ENCODE measurements at regions of chr5 and their contacts with region 1.

Region 1: DNA sequence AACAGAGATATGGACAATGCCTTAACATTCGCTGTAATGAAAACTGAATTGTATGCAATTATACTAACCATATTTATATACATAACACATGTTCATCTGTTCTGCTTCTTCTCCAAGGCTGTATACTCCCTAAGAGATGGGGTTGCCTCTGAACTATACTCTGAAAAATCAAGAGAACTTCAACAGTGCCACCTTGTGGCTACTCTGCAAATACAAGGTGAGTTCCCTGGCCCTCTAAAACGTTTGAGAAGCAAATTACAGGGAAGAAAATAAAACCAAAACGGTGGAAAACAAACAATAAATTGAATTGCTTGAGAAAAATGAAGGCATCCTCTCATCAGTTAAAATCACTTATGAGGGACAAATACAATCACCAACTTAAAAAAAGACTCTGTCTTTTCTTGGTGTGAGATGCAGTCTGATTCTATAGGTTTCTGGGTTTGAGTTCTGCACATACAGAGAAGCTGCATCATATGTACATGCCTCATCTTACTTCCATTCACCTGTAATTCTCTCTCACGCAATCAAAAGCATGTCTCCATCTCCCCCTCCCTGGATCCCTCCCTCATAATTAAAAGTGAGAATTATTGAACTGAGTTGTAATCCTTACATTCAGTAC is 98.6 kb downstream of the FBXW11 start:
- DNase-seq: peak; percentile 69
- ATAC-seq: peak; percentile 63
- H3K4me3 ChIP-seq: no peak overlapping the region
- H3K4me3 Mint-ChIP-seq: no peak overlapping the region
- H3K27ac ChIP-seq: no peak overlapping the region
- H3K27ac Mint-ChIP-seq: no peak overlapping the region
- H3K4me1 ChIP-seq: peaks cover 9 to 16% of the 10 kb centered on the region in 2 donors
- H3K4me1 Mint-ChIP-seq: peaks cover 50% of the 10 kb centered on the region
- H3K27me3 ChIP-seq: no peaks in the 10 kb centered on the region
- H3K27me3 Mint-ChIP-seq: no peaks in the 10 kb centered on the region
- CTCF ChIP-seq: peak; percentile 86

Region 2: GRCh38 chr5:171272996-171273970 is 634.6 kb before region 1 on chr5:
- CTCF ChIA-PET with region 1: no interaction called
- POLR2A ChIA-PET with region 1: no interaction called
- intact Hi-C with region 1: loop called (anchors 5 kb)
- DNase-seq: peak; percentile 2
- ATAC-seq: no peak
- H3K4me3 ChIP-seq: no peak overlapping the region
- H3K4me3 Mint-ChIP-seq: no peak overlapping the region
- H3K27ac ChIP-seq: no peak overlapping the region
- H3K27ac Mint-ChIP-seq: no peak overlapping the region
- H3K4me1 ChIP-seq: no peaks in the 10 kb centered on the region
- H3K4me1 Mint-ChIP-seq: no peaks in the 10 kb centered on the region
- H3K27me3 ChIP-seq: no peaks in the 10 kb centered on the region
- H3K27me3 Mint-ChIP-seq: peaks cover 21% of the 10 kb centered on the region
- CTCF ChIP-seq: no peak

Region 3: DNA sequence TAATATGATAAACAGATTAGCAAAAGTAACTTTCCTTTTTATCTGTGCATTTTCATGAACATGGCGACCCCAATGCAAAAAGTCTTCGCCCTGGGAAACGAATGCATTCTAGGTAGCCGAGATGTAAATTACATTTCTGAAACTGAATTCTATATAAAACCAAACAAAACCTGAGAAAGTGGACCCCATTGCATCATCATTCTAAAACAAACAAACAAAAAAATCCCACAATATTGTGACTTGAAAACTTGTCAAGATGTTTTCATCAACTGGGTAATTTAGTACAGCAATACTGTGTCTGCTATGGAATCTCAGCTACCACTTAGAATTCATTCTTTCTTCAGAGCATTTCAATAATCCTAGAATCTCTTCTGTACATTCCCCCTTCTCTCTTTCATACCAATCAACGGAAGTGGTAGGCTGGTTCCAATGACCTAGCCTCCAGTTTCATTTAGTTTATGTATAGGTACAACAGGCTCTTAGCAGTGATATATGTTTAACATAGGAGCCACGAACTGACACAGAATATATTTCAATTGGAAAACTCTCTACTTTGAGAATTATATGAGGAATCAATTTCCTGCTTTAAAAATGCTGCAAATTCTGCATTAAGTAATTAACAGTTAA is 13.0 kb after region 1 on chr5:
- CTCF ChIA-PET with region 1: interaction called, 27 read pairs
- POLR2A ChIA-PET with region 1: no interaction called
- intact Hi-C with region 1: no loop called
- DNase-seq: no peak
- ATAC-seq: no peak
- H3K4me3 ChIP-seq: no peak overlapping the region
- H3K4me3 Mint-ChIP-seq: no peak overlapping the region
- H3K27ac ChIP-seq: peak overlapping the region in 1 of 2 donors; percentile 49
- H3K27ac Mint-ChIP-seq: no peak overlapping the region
- H3K4me1 ChIP-seq: peaks cover 21 to 27% of the 10 kb centered on the region in 2 donors
- H3K4me1 Mint-ChIP-seq: peaks cover 67% of the 10 kb centered on the region
- H3K27me3 ChIP-seq: no peaks in the 10 kb centered on the region
- H3K27me3 Mint-ChIP-seq: no peaks in the 10 kb centered on the region
- CTCF ChIP-seq: no peak

Region 4: GRCh38 chr5:172035039-172035438 is 127.2 kb after region 1 on chr5:
- CTCF ChIA-PET with region 1: interaction called, 227 read pairs
- POLR2A ChIA-PET with region 1: interaction called, 3 read pairs
- intact Hi-C with region 1: loop called (anchors 1 kb)
- DNase-seq: peak; percentile 45
- ATAC-seq: peak; percentile 63
- H3K4me3 ChIP-seq: peak overlapping the region in 1 of 5 experiments; percentile 26
- H3K4me3 Mint-ChIP-seq: peak overlapping the region; percentile 15
- H3K27ac ChIP-seq: peak overlapping the region in 1 of 2 donors; percentile 61
- H3K27ac Mint-ChIP-seq: peak overlapping the region; percentile 50
- H3K4me1 ChIP-seq: peaks cover 12 to 15% of the 10 kb centered on the region in 2 donors
- H3K4me1 Mint-ChIP-seq: peaks cover 15% of the 10 kb centered on the region
- H3K27me3 ChIP-seq: no peaks in the 10 kb centered on the region
- H3K27me3 Mint-ChIP-seq: no peaks in the 10 kb centered on the region
- CTCF ChIP-seq: no peak

Region 5: GRCh38 chr5:172059661-172060100 is 151.8 kb after region 1 on chr5:
- CTCF ChIA-PET with region 1: interaction called, 72 read pairs
- POLR2A ChIA-PET with region 1: interaction called, 3 read pairs
- intact Hi-C with region 1: loop called (anchors 1 kb)
- DNase-seq: peak; percentile 46
- ATAC-seq: no peak
- H3K4me3 ChIP-seq: no peak overlapping the region
- H3K4me3 Mint-ChIP-seq: no peak overlapping the region
- H3K27ac ChIP-seq: no peak overlapping the region
- H3K27ac Mint-ChIP-seq: no peak overlapping the region
- H3K4me1 ChIP-seq: no peaks in the 10 kb centered on the region
- H3K4me1 Mint-ChIP-seq: no peaks in the 10 kb centered on the region
- H3K27me3 ChIP-seq: no peaks in the 10 kb centered on the region
- H3K27me3 Mint-ChIP-seq: no peaks in the 10 kb centered on the region
- CTCF ChIP-seq: peak; percentile 67

Measured in B cell (primary cell).